ENCODE measurements at regions of chr20 and their contacts with region 1.

Region 1: DNA sequence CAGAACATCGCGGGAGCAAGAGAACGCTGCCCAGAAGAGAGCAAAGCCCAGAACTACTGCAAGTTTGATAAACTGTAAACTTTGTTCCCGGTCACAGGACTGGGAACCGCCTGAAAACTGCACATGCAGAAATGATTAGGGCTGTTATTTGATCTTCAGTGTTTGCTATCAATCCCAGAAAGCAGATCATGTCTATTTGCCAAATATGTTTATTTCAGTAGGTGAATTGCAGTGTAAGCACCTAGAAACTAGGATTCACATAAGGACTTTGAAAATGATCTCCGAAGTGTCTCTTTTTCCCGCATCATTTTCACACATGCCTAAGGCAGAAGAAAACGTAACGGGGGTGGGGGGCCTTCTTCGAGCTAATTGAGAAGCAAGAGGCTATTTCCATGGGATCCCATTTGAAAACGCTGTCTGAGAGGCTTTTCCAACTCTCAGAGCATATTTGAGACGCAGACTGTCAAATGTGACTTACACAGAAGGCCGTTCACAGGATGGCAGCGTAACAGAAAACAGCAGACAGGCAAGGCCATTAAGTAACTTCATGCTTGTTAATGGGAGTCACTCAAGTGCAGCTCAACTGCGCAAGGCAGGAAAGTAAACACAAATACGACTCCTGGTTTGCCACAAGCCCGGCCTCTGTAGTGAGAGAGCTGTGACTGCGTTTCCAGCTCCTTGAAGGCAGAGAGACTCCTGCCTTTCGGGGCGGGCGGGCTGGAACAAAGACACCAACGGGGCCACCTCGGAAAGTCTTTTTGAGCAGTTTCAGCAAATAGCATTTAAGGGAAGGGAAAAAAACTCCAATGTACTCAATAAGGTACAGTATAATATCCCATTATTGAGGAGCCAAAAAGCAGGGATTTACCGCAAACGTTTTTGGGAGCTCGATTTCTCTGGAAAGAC is 144.7 kb upstream of the ZNF217 start:
- DNase-seq: peak; percentile 94 to 97
- H3K4me3 ChIP-seq: peak overlapping the region; percentile 35
- H3K4me3 Mint-ChIP-seq: peak overlapping the region; percentile 72
- H3K27ac Mint-ChIP-seq: peak overlapping the region; percentile 95
- H3K4me1 ChIP-seq: peaks cover 67% of the 10 kb centered on the region
- H3K4me1 Mint-ChIP-seq: peaks cover 68% of the 10 kb centered on the region
- H3K27me3 ChIP-seq: no peaks in the 10 kb centered on the region
- H3K27me3 Mint-ChIP-seq: no peaks in the 10 kb centered on the region
- CTCF ChIP-seq: no peak

Region 2: DNA sequence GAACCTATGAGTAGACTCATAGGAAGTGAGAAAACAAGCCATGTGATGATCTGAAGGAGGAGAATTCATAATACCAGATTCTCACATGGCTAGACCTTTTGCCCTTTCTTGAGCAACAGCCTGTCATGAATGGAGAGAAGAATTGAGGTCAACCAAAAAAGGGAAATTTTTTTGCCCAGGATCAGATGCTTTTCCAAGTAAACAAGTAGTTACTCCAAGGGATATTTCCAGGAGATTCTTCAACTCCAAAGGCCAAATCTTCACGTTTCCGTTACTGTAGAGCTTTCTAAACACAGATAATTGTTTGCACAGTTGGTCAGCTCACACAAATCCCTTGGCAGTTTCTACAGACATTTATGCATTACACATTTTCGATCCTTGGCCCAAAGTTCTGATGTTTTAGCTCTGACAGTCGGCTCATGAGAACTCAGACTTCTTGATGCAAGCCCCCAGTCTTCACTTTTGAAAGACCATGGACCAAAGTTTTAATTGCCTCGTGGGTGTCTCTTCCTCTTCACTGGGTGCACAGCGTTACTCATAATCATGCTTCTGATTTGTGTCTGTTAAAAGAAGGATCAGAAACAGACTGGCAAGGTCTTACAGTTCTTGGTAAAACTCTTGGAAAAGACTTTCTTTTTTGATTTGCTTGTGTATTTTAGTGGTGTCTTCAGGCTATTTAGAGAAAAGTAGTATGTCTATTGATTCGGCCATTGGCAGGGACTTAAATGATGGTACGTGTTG is 651.1 kb before region 1 on chr20:
- CTCF ChIA-PET with region 1: no interaction called
- POLR2A ChIA-PET with region 1: no interaction called
- intact Hi-C with region 1: no loop called
- DNase-seq: no peak
- H3K4me3 ChIP-seq: no peak overlapping the region
- H3K4me3 Mint-ChIP-seq: no peak overlapping the region
- H3K27ac Mint-ChIP-seq: no peak overlapping the region
- H3K4me1 ChIP-seq: no peaks in the 10 kb centered on the region
- H3K4me1 Mint-ChIP-seq: no peaks in the 10 kb centered on the region
- H3K27me3 ChIP-seq: no peaks in the 10 kb centered on the region
- H3K27me3 Mint-ChIP-seq: peaks cover 11% of the 10 kb centered on the region
- CTCF ChIP-seq: no peak

Region 3: GRCh38 chr20:53594068-53595017 is 143.9 kb before region 1 on chr20:
- CTCF ChIA-PET with region 1: interaction called, 11 read pairs
- POLR2A ChIA-PET with region 1: interaction called, 24 read pairs
- intact Hi-C with region 1: loop called (anchors 2 kb)
- DNase-seq: peak; percentile 99 to 100
- H3K4me3 ChIP-seq: peak overlapping the region; percentile 98
- H3K4me3 Mint-ChIP-seq: peak overlapping the region; percentile 87
- H3K27ac Mint-ChIP-seq: peak overlapping the region; percentile 80
- H3K4me1 ChIP-seq: peaks cover 38% of the 10 kb centered on the region
- H3K4me1 Mint-ChIP-seq: peaks cover 44% of the 10 kb centered on the region
- H3K27me3 ChIP-seq: no peaks in the 10 kb centered on the region
- H3K27me3 Mint-ChIP-seq: no peaks in the 10 kb centered on the region
- CTCF ChIP-seq: peak; percentile 64 to 79

Region 4: GRCh38 chr20:53708129-53708968 is 29.9 kb before region 1 on chr20:
- CTCF ChIA-PET with region 1: interaction called, 3 read pairs
- POLR2A ChIA-PET with region 1: interaction called, 7 read pairs
- intact Hi-C with region 1: loop called (anchors 1 kb)
- DNase-seq: peak; percentile 54 to 71
- H3K4me3 ChIP-seq: no peak overlapping the region
- H3K4me3 Mint-ChIP-seq: peak overlapping the region; percentile 39
- H3K27ac Mint-ChIP-seq: peak overlapping the region; percentile 66
- H3K4me1 ChIP-seq: peaks cover 47% of the 10 kb centered on the region
- H3K4me1 Mint-ChIP-seq: peaks cover 43% of the 10 kb centered on the region
- H3K27me3 ChIP-seq: no peaks in the 10 kb centered on the region
- H3K27me3 Mint-ChIP-seq: no peaks in the 10 kb centered on the region
- CTCF ChIP-seq: no peak

Region 5: DNA sequence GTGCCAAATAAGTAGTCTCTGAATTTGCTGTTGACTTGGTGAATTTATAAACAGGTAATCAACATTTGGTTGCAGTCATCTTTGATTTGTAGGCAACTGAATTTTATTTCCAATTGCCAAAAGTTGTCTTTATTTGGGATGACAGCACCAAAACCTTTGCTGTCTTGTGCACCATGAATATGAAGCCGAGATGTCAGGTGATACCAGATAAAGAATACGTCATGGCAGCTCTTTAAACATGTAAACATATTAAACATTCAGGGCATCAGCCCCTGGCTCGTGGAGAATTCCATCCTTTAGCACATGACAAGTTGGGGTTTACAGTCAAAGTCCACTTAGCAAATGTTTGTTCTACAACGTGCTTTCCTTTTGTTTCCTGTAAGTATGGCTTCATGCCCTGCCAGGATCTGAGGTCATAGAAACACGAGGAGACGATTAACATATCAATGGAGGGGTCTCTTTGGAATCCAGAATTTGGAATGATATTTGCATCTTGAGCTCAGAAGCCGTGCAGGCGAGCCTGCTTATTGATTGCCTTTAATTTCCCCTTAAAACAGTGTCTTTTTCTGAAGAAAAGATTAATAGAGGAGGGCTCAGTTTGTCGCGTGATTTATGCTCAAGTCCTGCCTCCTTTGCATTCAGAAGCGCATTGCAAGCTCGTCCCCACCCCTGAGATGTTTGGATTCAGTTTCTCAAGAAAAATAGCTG is 25.6 kb after region 1 on chr20:
- CTCF ChIA-PET with region 1: interaction called, 16 read pairs
- POLR2A ChIA-PET with region 1: interaction called, 34 read pairs
- intact Hi-C with region 1: loop called (anchors 1 kb)
- DNase-seq: peak; percentile 95 to 97
- H3K4me3 ChIP-seq: peak overlapping the region; percentile 26
- H3K4me3 Mint-ChIP-seq: peak overlapping the region; percentile 82
- H3K27ac Mint-ChIP-seq: peak overlapping the region; percentile 99
- H3K4me1 ChIP-seq: peaks cover 61% of the 10 kb centered on the region
- H3K4me1 Mint-ChIP-seq: peaks cover 55% of the 10 kb centered on the region
- H3K27me3 ChIP-seq: no peaks in the 10 kb centered on the region
- H3K27me3 Mint-ChIP-seq: no peaks in the 10 kb centered on the region
- CTCF ChIP-seq: peak; percentile 33 to 35

Region 6: GRCh38 chr20:53786445-53787267 is 48.4 kb after region 1 on chr20:
- CTCF ChIA-PET with region 1: interaction called, 10 read pairs
- POLR2A ChIA-PET with region 1: interaction called, 15 read pairs
- intact Hi-C with region 1: loop called (anchors 1 kb)
- DNase-seq: peak; percentile 47 to 67
- H3K4me3 ChIP-seq: no peak overlapping the region; the same call in 1 of the 2 replicates
- H3K4me3 Mint-ChIP-seq: peak overlapping the region; percentile 39
- H3K27ac Mint-ChIP-seq: peak overlapping the region; percentile 59
- H3K4me1 ChIP-seq: peaks cover 71% of the 10 kb centered on the region
- H3K4me1 Mint-ChIP-seq: peaks cover 70% of the 10 kb centered on the region
- H3K27me3 ChIP-seq: no peaks in the 10 kb centered on the region
- H3K27me3 Mint-ChIP-seq: no peaks in the 10 kb centered on the region
- CTCF ChIP-seq: peak in 1 of 2 experiments; percentile 13

Region 7: DNA sequence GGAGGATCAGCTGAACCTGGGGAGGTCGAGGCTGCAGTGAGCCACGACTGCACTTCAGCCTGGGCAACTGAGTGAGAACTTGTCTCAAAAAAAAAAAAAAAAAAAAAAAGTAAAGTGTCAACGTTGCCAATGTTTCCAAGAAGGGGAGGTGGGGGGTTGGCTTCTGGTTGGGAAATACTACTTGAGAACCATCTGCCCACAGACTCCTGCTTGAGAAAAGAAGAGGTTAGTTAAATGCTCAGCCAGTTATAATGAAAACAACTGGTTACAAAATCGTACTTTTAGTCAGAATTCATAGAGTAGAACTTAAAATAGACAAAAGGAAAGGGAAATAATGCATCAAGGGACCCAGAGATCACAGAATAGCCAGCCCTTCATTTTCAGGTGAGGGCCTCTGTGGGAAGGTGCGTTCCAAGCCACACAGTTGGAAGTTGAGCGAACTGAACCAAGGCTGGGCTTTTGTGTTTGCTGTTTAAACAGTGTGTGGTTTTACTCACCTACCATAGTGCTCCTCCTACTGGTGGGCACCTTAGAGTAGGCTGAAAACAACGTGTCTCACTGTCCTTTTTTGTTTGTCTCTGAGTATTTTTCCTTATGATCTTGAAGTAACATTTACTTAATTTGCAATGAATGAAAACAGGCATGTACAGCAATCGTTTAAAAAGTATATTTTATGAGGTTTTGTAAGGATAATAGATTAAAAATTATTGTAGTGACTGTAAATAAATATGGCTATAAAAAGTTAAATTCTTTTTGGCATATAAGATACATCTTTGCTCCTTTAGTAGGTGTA is 131.4 kb after region 1 on chr20:
- CTCF ChIA-PET with region 1: interaction called, 4 read pairs
- POLR2A ChIA-PET with region 1: interaction called, 12 read pairs
- intact Hi-C with region 1: no loop called
- DNase-seq: peak; percentile 94
- H3K4me3 ChIP-seq: no peak overlapping the region
- H3K4me3 Mint-ChIP-seq: peak overlapping the region; percentile 29
- H3K27ac Mint-ChIP-seq: peak overlapping the region; percentile 45
- H3K4me1 ChIP-seq: peaks cover 59% of the 10 kb centered on the region
- H3K4me1 Mint-ChIP-seq: peaks cover 63% of the 10 kb centered on the region
- H3K27me3 ChIP-seq: no peaks in the 10 kb centered on the region
- H3K27me3 Mint-ChIP-seq: no peaks in the 10 kb centered on the region
- CTCF ChIP-seq: peak; percentile 99 to 100

Region 8: GRCh38 chr20:53939572-53940359 is 201.5 kb after region 1 on chr20:
- CTCF ChIA-PET with region 1: interaction called, 10 read pairs
- POLR2A ChIA-PET with region 1: no interaction called
- intact Hi-C with region 1: no loop called
- DNase-seq: peak; percentile 95 to 96
- H3K4me3 ChIP-seq: no peak overlapping the region
- H3K4me3 Mint-ChIP-seq: no peak overlapping the region
- H3K27ac Mint-ChIP-seq: no peak overlapping the region
- H3K4me1 ChIP-seq: peaks cover 30% of the 10 kb centered on the region
- H3K4me1 Mint-ChIP-seq: peaks cover 35% of the 10 kb centered on the region
- H3K27me3 ChIP-seq: no peaks in the 10 kb centered on the region; the same call in 1 of the 2 replicates
- H3K27me3 Mint-ChIP-seq: no peaks in the 10 kb centered on the region
- CTCF ChIP-seq: peak; percentile 93 to 98